ENCODE measurements at regions of chr3 and their contacts with region 1.

Region 1: DNA sequence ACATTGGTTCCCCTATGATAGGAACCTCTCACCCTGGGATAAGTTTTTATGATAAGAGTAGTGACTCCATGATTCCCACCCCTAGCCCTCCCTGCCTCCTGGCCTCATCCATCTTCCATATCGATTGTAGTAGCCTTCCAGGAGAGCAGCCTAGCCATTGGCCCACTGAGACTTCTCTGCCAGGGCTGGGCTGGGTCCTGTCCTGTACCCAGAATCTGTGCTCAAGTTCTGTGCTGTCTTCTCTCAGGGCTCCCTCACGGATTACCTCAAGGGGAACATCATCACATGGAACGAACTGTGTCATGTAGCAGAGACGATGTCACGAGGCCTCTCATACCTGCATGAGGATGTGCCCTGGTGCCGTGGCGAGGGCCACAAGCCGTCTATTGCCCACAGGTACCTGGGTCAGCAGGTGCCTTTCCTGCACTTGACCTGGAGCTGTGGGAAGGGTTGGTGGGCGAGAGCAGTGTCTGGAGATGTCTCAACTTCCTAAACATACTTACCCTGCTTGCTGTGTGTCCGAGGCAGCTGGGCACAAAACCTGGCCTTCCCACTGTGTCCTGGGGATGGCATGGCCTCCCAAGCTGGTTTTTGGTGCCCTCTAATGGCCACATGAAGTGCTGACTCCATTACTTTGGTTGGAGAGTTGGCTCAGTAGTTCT is 16.6 kb upstream of the EXOG start:
- DNase-seq: peak in 27 of 35 experiments; percentile 11 to 74 (median 29)
- ATAC-seq: peak in 3 of 4 experiments; percentile 63 to 80 (median 73)
- H3K4me3 ChIP-seq: no peak overlapping the region
- H3K4me3 Mint-ChIP-seq: no peak overlapping the region
- H3K27ac ChIP-seq: no peak overlapping the region
- H3K27ac Mint-ChIP-seq: no peak overlapping the region
- H3K4me1 ChIP-seq: no peaks in the 10 kb centered on the region
- H3K4me1 Mint-ChIP-seq: peaks cover 0 to 20% (median 4%) of the 10 kb centered on the region in 3 donors
- H3K27me3 ChIP-seq: no peaks in the 10 kb centered on the region
- H3K27me3 Mint-ChIP-seq: no peaks in the 10 kb centered on the region

Region 2: GRCh38 chr3:38117748-38118420 is 361.7 kb before region 1 on chr3:
- CTCF ChIA-PET with region 1: interaction called, 4 to 10 read pairs
- POLR2A ChIA-PET with region 1: no interaction called
- DNase-seq: peak; percentile 48 to 82 (median 68)
- ATAC-seq: peak; percentile 77 to 90 (median 86)
- H3K4me3 ChIP-seq: no peak overlapping the region
- H3K4me3 Mint-ChIP-seq: no peak overlapping the region
- H3K27ac ChIP-seq: no peak overlapping the region
- H3K27ac Mint-ChIP-seq: peak overlapping the region; percentile 42 to 74
- H3K4me1 ChIP-seq: peaks cover 0 to 5% of the 10 kb centered on the region in 2 experiments
- H3K4me1 Mint-ChIP-seq: peaks cover 2 to 17% (median 12%) of the 10 kb centered on the region in 3 donors
- H3K27me3 ChIP-seq: peaks cover 0 to 3% of the 10 kb centered on the region in 2 experiments
- H3K27me3 Mint-ChIP-seq: no peaks in the 10 kb centered on the region

Region 3: GRCh38 chr3:38270616-38271015 is 208.9 kb before region 1 on chr3:
- CTCF ChIA-PET with region 1: no interaction called
- POLR2A ChIA-PET with region 1: no interaction called
- DNase-seq: no peak
- ATAC-seq: no peak
- H3K4me3 ChIP-seq: no peak overlapping the region
- H3K4me3 Mint-ChIP-seq: no peak overlapping the region
- H3K27ac ChIP-seq: no peak overlapping the region
- H3K27ac Mint-ChIP-seq: no peak overlapping the region
- H3K4me1 ChIP-seq: peaks cover 7 to 11% of the 10 kb centered on the region in 2 experiments
- H3K4me1 Mint-ChIP-seq: peaks cover 15 to 26% (median 16%) of the 10 kb centered on the region in 3 donors
- H3K27me3 ChIP-seq: no peaks in the 10 kb centered on the region
- H3K27me3 Mint-ChIP-seq: no peaks in the 10 kb centered on the region

Region 4: DNA sequence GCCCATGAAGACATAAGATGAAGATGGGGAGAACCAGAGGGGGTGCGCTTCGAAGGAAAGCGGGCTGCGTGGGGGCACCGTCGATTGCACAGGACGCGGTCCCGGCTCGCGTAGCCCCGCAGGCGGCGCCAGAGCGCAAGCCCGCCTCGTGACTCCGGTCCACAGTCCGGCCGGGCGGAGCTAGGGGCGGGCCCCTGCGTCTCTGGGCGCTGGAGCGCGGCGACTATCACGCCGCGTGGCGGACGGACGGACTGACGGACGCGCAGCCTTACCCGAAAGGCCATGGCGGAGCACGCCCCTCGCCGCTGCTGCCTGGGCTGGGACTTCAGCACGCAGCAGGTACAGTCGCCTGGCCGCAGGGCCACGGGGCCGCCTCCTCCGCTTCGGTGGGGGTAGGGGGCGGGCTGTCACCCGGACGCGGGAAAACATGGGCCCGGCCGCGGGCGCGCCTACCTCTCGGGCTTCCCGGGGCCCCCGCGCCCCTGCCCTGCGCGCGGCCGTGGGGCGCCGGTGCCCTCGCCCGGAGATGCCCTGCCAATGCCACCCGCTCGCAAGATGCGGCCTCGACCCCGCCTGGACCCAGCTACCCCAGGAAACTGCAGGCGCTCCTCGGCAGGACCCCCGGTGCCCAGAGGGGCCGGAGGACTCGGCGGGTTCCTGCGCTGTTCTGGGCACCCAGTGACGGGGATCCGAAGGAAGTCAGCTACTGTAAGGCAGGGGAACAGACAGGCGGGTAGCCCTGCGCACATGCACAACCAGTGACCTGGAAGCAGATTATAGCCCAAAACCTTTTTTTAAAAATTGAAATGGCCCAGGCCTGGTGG is 132.8 kb before region 1 on chr3 and contains the start of gene XYLB:
- CTCF ChIA-PET with region 1: interaction called, 6 to 19 read pairs
- POLR2A ChIA-PET with region 1: no interaction called
- DNase-seq: peak; percentile 31 to 79 (median 63)
- ATAC-seq: peak; percentile 97 to 98 (median 98)
- H3K4me3 ChIP-seq: peak within 1 kb of the TSS; percentile 55 to 59
- H3K4me3 Mint-ChIP-seq: peak within 1 kb of the TSS in 2 of 3 donors; percentile 75 to 85
- H3K27ac ChIP-seq: no peak within 1 kb of the TSS
- H3K27ac Mint-ChIP-seq: no peak within 1 kb of the TSS
- H3K4me1 ChIP-seq: peaks cover 0 to 14% of the 10 kb centered on the region in 2 experiments
- H3K4me1 Mint-ChIP-seq: peaks cover 3 to 6% (median 4%) of the 10 kb centered on the region in 3 donors
- H3K27me3 ChIP-seq: peaks cover 0 to 3% of the 10 kb centered on the region in 2 experiments
- H3K27me3 Mint-ChIP-seq: no peaks in the 10 kb centered on the region
- total RNA-seq, gene XYLB: 0.59 to 1.9 (median 1.0) TPM

Region 5: DNA sequence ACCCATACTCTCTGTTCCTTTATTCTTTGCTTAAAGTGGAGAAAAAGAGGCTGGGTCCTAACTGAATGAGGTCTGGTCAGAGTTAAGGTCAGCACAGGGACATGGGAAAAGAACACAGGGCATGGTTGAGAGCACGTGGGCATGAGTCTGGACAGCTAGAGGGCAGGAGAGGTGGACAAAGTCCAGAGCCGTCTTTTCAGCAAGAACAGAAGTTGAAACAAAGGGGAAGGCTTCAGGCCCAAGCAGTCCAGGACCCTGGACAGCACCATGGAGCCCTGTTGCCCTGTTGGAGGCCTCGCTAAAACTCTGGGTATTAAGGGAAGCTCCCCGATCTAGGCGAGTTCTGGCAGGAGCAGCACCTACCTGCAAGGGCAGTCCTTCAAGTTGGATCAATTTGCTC is 82.2 kb before region 1 on chr3:
- CTCF ChIA-PET with region 1: no interaction called
- POLR2A ChIA-PET with region 1: no interaction called
- DNase-seq: peak in 1 of 35 experiments; percentile 25
- ATAC-seq: no peak
- H3K4me3 ChIP-seq: no peak overlapping the region
- H3K4me3 Mint-ChIP-seq: no peak overlapping the region
- H3K27ac ChIP-seq: no peak overlapping the region
- H3K27ac Mint-ChIP-seq: no peak overlapping the region
- H3K4me1 ChIP-seq: no peaks in the 10 kb centered on the region
- H3K4me1 Mint-ChIP-seq: no peaks in the 10 kb centered on the region
- H3K27me3 ChIP-seq: no peaks in the 10 kb centered on the region
- H3K27me3 Mint-ChIP-seq: no peaks in the 10 kb centered on the region

Region 6: GRCh38 chr3:39000008-39000450 is 520.5 kb after region 1 on chr3:
- CTCF ChIA-PET with region 1: no interaction called
- POLR2A ChIA-PET with region 1: no interaction called
- DNase-seq: peak in 1 of 35 experiments; percentile 52
- ATAC-seq: peak in 3 of 4 experiments; percentile 43 to 57 (median 46)
- H3K4me3 ChIP-seq: no peak overlapping the region
- H3K4me3 Mint-ChIP-seq: no peak overlapping the region
- H3K27ac ChIP-seq: no peak overlapping the region
- H3K27ac Mint-ChIP-seq: no peak overlapping the region
- H3K4me1 ChIP-seq: no peaks in the 10 kb centered on the region
- H3K4me1 Mint-ChIP-seq: no peaks in the 10 kb centered on the region
- H3K27me3 ChIP-seq: peaks cover 0 to 3% of the 10 kb centered on the region in 2 experiments
- H3K27me3 Mint-ChIP-seq: peaks cover 6 to 20% of the 10 kb centered on the region in 2 donors